Mammary epithelial cell (primary cell): ENCODE measurements at regions of chr6 and their contacts with region 1.

Region 1: GRCh38 chr6:129469070-129469662 is 240.8 kb downstream of the ARHGAP18 start:
- DNase-seq: peak; percentile 11
- H3K4me3 ChIP-seq: no peak overlapping the region
- H3K27ac ChIP-seq: no peak overlapping the region
- H3K4me1 ChIP-seq: no peaks in the 10 kb centered on the region
- H3K27me3 ChIP-seq: no peaks in the 10 kb centered on the region
- CTCF ChIP-seq: peak in 1 of 2 donors; percentile 43

Region 2: GRCh38 chr6:129523816-129524215 is 54.6 kb after region 1 on chr6:
- CTCF ChIA-PET with region 1: no interaction called
- dilution Hi-C with region 1: no loop called
- in situ Hi-C with region 1: no loop called
- intact Hi-C with region 1: no loop called
- DNase-seq: no peak
- H3K4me3 ChIP-seq: no peak overlapping the region
- H3K27ac ChIP-seq: no peak overlapping the region
- H3K4me1 ChIP-seq: peaks cover 7% of the 10 kb centered on the region
- H3K27me3 ChIP-seq: no peaks in the 10 kb centered on the region
- CTCF ChIP-seq: no peak

Region 3: DNA sequence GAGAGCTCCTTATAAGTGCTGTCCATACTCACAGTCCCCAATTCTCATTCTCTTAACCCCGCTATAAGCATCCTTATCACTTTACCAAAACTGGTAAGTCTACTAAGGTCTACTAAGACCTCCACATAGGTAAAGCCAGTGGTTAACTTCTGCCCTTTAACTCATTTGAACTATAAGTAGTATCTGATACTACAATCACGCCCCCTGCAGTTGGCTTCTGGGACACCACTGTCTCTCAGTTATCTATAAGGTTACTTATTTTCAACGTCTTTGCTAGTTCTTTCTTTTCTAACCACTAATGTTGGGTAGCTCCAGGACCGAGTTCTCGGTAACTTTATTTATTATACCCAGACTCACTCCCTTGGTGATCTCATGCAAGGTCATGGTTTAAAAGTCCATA is 98.2 kb after region 1 on chr6:
- CTCF ChIA-PET with region 1: no interaction called
- dilution Hi-C with region 1: no loop called
- in situ Hi-C with region 1: no loop called
- intact Hi-C with region 1: loop called (anchors 1 kb)
- DNase-seq: no peak
- H3K4me3 ChIP-seq: no peak overlapping the region
- H3K27ac ChIP-seq: no peak overlapping the region
- H3K4me1 ChIP-seq: no peaks in the 10 kb centered on the region
- H3K27me3 ChIP-seq: no peaks in the 10 kb centered on the region
- CTCF ChIP-seq: peak; percentile 60 to 65

Region 4: DNA sequence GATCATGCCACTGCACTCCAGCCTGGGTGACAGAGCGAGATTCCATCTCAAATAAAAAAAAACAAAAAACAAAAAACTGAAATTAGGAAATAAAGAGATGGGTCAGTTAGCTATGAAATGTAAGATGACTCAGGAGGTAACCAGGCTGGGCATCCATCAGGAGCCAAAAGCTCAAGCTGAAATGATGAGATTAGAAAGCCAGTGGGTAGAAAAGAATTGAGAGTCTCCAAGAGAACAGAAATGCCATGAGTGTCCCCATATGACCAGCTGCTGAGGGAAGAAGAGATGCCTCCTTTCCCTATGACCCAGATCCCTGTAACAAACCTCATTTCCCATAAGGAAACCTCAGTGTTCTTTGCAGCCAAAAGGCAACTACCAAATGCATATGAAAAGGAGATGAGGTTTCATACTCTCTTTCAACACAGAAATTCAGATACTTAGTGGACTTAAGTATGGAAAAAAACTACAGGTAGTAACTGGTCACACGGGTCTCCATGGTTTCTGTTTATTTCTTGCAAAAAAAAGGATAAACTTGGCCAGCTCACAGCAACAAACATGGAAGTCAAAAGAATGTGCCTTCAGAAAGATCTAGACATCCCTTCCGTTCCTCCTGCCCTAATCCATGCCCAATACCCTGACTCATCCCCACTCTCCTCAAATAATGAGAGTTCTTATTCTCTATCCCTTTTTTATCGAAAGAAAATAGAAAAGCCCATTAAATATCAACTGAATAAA is 232.7 kb after region 1 on chr6:
- CTCF ChIA-PET with region 1: no interaction called
- dilution Hi-C with region 1: no loop called
- in situ Hi-C with region 1: no loop called
- intact Hi-C with region 1: no loop called
- DNase-seq: no peak
- H3K4me3 ChIP-seq: no peak overlapping the region
- H3K27ac ChIP-seq: peak overlapping the region; percentile 54
- H3K4me1 ChIP-seq: peaks cover 31% of the 10 kb centered on the region
- H3K27me3 ChIP-seq: no peaks in the 10 kb centered on the region
- CTCF ChIP-seq: no peak

Region 5: DNA sequence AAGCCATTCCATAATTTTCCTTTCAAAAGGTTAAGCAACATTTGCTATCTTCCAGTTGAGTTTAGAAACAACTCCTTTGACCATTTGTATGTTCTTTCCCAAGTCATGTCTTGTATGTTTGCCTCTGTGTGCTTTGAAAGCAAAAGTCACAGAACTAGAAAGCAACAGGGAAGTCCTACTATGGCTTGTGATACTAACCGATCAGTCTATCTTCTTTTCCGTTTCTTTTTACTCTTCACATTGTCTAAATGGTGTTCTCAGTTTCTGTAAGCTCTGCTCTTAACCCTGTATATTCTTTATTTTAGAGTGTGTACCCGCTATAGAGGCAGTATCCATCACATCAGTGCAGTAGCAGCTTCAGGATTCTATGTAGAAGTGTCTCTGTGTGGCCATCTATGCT is 359.1 kb after region 1 on chr6:
- CTCF ChIA-PET with region 1: no interaction called
- dilution Hi-C with region 1: no loop called
- in situ Hi-C with region 1: no loop called
- intact Hi-C with region 1: no loop called
- DNase-seq: no peak
- H3K4me3 ChIP-seq: no peak overlapping the region
- H3K27ac ChIP-seq: no peak overlapping the region
- H3K4me1 ChIP-seq: no peaks in the 10 kb centered on the region
- H3K27me3 ChIP-seq: no peaks in the 10 kb centered on the region
- CTCF ChIP-seq: no peak